Colonic mucosa (tissue), 4 donors: ENCODE measurements at regions of chr15 and their contacts with region 1.

Region 1: DNA sequence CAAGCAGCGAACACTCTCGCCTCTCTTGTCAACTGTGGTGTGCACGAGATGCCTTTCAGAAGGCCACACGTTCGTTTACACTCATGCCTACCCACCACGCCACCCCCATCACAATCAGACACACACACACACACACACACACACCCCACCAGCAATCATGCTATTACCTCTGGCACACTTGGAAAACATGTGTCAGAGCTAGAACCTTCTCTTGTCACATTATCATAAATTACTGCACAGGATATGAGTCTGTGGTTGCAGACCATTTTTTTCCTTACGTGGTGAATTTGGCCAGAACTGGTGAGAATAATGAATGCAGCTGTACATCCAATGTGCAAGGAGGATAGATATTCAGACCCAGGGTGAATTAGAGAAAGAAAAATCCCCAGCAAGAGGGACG is 52.4 kb downstream of the TRIM69 start:
- DNase-seq: no peak
- H3K4me3 ChIP-seq: no peak overlapping the region
- H3K27ac ChIP-seq: no peak overlapping the region
- H3K4me1 ChIP-seq: no peaks in the 10 kb centered on the region
- H3K27me3 ChIP-seq: no peaks in the 10 kb centered on the region
- CTCF ChIP-seq: no peak

Region 2: DNA sequence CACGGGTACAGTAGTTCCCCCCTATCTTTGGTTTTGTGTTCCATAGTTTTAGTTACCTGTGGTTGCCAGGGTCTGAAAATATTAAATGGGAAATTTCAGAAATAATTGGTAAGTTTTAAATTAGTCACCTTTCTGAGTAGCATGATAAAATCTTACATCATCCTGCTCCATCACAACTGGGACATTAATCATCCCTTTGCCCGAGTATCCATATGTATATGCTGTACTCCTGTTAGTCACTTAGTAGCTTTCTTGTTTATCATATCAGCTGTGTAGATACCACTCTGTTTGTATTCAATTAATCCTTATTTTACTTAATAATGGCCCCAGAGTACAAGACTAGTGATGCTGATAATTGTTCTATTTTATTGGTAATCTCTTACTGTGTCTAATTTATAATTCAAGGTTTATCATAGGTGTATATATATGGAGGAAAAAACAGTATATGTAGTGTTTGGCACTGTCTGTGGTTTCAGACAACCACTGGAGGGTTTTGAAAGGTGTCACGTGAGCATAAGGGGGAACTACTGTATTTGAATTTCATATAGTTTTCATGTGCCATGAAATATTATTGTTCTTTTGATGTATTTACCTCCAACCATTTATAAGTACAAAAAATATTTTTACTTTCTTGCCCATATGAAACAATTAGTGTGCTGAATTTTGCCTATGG is 319.9 kb before region 1 on chr15:
- intact Hi-C with region 1: no loop called
- DNase-seq: no peak
- H3K4me3 ChIP-seq: no peak overlapping the region
- H3K27ac ChIP-seq: no peak overlapping the region
- H3K4me1 ChIP-seq: no peaks in the 10 kb centered on the region
- H3K27me3 ChIP-seq: no peaks in the 10 kb centered on the region
- CTCF ChIP-seq: no peak

Region 3: DNA sequence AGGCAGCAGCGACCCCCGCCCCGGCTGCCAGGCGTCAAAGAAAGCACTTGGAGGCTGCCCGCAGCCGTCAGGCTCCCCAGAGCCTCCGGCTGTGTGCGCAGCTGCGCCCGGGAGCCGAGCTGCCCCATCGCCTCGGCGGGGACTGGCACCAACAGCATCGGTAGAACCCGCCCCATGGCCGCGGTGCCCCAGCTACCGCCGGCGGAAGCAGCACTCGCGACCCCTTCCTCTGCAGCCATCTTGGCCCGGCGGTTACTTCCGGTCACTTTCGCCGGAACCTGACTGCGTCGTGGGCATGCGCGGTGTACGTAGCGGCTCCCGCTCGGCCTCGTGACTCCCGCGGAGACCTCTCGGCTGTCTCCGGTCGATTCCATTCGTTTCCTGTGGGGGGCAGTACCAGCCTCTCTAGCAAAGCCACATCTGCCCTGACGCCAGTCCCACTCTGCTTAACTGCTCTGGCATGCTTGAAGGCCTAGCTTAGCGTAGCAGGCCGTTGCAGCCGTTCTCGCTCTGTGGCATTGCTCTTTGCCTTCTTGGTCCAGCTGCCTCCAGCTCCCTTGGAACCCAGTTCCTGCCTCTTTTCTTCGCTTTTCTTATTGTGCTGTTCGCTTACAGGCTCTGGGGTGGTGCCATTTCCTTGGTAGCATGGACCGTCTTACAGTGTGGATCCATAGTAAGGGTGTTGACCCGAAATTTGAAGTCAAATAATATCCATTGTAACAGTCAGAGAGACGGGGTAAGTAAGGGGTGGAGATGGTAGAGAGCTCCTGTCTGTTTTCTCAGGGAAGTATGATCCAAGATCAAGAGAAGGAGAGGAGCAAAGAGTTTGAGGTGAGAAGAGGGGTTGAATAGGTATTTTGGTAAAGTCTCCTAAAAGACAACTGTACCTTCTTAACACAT is 125.1 kb before region 1 on chr15 and contains the start of gene SPG11:
- intact Hi-C with region 1: loop called (anchors 5 kb)
- DNase-seq: peak; percentile 99
- H3K4me3 ChIP-seq: peak within 1 kb of the TSS; percentile 81
- H3K27ac ChIP-seq: peak within 1 kb of the TSS; percentile 98
- H3K4me1 ChIP-seq: peaks cover 13% of the 10 kb centered on the region
- H3K27me3 ChIP-seq: no peaks in the 10 kb centered on the region
- CTCF ChIP-seq: peak; percentile 96
- total RNA-seq, gene SPG11: 79.3 to 95.3 TPM